Activated CD8-positive, alpha-beta T cell treated with anti-CD3 and anti-CD28 coated beads, Interleukin-2, amount 10 ng/mL, durations not matched to agents 7 days and 5 days (primary cell): ENCODE measurements at regions of chr1 and their contacts with region 1.

Region 1: DNA sequence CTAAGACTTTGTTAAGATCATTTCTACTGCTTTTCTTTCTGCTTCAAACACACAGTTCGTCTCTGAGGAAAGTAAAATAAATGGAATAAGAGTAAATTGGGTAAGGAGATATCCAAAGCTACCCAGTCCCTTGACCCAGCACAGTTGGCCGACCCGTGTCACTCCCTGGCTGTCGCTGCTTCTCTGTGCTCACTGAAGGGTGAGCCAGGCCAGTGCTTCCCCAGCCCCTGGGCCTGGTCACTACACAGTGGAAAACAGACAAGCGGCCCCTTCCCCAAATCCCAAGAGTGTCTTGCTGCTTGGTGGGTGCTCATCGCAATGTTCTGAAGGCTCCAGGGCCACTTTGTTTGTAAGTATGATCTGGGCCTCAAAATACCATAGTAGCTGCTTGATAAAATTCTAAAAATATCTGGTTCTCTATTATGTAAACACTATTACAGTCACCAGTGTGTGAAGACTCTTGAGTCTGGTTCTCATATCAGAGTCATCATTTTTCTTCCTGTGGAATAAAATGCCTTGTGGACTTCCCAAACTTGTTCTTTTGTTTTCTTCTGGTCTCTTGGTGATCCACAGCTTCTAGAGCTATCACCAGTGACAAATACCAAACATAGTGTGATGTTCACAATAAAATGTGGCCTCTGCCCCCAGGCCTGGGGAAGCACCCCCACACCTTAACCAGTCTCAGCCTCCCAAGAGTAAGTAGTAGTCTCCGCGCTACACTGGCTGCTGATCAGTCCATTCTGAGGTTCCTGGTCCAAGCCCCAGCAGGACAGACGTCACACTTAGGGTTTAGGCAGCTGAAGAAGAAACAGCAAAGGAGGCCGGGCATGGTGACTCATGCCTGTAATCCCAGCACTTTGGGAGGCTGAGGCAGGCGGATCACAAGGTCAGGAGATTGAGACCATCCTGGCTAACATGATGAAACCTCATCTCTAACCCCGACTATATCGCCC is 106.2 kb downstream of the DHRS3 start:
- DNase-seq: no peak
- ATAC-seq: no peak
- H3K4me3 Mint-ChIP-seq: peak overlapping the region; percentile 80
- H3K27ac Mint-ChIP-seq: peak overlapping the region; percentile 100
- H3K4me1 Mint-ChIP-seq: peaks cover 53% of the 10 kb centered on the region
- H3K27me3 Mint-ChIP-seq: no peaks in the 10 kb centered on the region

Region 2: DNA sequence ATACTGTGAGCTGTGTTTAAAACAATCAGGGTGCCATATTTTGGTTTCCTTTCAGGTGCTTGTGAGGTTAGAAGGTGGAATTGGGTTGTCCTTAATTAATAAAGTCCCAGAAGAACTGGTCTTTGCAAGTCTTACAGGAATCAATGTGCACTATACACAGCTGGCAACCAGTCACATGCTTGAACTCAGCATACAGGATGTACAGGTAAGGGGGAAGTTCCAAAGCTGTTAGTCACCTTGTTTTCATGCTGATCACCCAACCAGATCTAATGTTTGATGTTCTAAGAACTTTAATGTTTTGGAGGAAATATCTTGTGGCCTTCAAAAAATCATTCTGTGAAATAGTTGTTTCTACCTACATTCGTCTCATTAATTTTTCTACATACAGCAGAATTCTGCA is 125.7 kb before region 1 on chr1:
- CTCF ChIA-PET with region 1: interaction called, 4 read pairs
- POLR2A ChIA-PET with region 1: interaction called, 11 read pairs
- DNase-seq: no peak
- ATAC-seq: no peak
- H3K4me3 Mint-ChIP-seq: no peak overlapping the region
- H3K27ac Mint-ChIP-seq: peak overlapping the region; percentile 76
- H3K4me1 Mint-ChIP-seq: peaks cover 39% of the 10 kb centered on the region
- H3K27me3 Mint-ChIP-seq: no peaks in the 10 kb centered on the region

Region 3: DNA sequence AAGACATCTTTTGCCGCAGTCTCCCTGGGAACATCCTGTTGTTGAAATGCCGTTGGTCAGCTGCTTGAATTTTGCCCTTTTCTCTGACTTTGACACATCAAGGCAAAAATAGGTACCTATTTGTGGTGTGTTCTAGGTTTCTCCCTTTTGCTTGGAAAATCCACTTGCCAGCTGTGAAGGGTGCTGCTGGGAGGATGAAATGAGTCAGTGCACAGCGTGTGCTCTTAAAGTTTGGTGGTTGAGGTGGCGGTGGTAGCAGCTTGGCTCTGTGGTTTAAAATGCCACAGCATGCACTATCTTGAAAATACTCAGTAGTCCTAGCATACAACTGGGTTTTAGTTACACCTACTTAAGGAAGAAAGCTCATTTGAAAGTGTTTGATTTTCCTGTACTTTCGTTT is 77.6 kb before region 1 on chr1:
- CTCF ChIA-PET with region 1: interaction called, 5 read pairs
- POLR2A ChIA-PET with region 1: interaction called, 23 read pairs
- DNase-seq: peak; percentile 88
- ATAC-seq: peak; percentile 63
- H3K4me3 Mint-ChIP-seq: peak overlapping the region; percentile 56
- H3K27ac Mint-ChIP-seq: peak overlapping the region; percentile 89
- H3K4me1 Mint-ChIP-seq: peaks cover 90% of the 10 kb centered on the region
- H3K27me3 Mint-ChIP-seq: no peaks in the 10 kb centered on the region

Region 4: GRCh38 chr1:12472798-12473551 is 38.8 kb before region 1 on chr1:
- CTCF ChIA-PET with region 1: interaction called, 16 read pairs
- POLR2A ChIA-PET with region 1: interaction called, 52 read pairs
- DNase-seq: peak; percentile 81
- ATAC-seq: peak; percentile 79
- H3K4me3 Mint-ChIP-seq: peak overlapping the region; percentile 68
- H3K27ac Mint-ChIP-seq: peak overlapping the region; percentile 90
- H3K4me1 Mint-ChIP-seq: peaks cover 88% of the 10 kb centered on the region
- H3K27me3 Mint-ChIP-seq: no peaks in the 10 kb centered on the region

Region 5: GRCh38 chr1:12491656-12492055 is 20.1 kb before region 1 on chr1:
- CTCF ChIA-PET with region 1: interaction called, 3 read pairs
- POLR2A ChIA-PET with region 1: interaction called, 11 read pairs
- DNase-seq: no peak
- ATAC-seq: no peak
- H3K4me3 Mint-ChIP-seq: no peak overlapping the region
- H3K27ac Mint-ChIP-seq: no peak overlapping the region
- H3K4me1 Mint-ChIP-seq: peaks cover 11% of the 10 kb centered on the region
- H3K27me3 Mint-ChIP-seq: no peaks in the 10 kb centered on the region

Region 6: GRCh38 chr1:12541274-12542142 is 29.7 kb after region 1 on chr1:
- CTCF ChIA-PET with region 1: no interaction called
- POLR2A ChIA-PET with region 1: no interaction called
- DNase-seq: no peak
- ATAC-seq: no peak
- H3K4me3 Mint-ChIP-seq: no peak overlapping the region
- H3K27ac Mint-ChIP-seq: no peak overlapping the region
- H3K4me1 Mint-ChIP-seq: peaks cover 16% of the 10 kb centered on the region
- H3K27me3 Mint-ChIP-seq: peaks cover 4% of the 10 kb centered on the region